Activated CD8-positive, alpha-beta T cell treated with anti-CD3 and anti-CD28 coated beads for 36 hours (primary cell): ENCODE measurements at regions of chr1 and their contacts with region 1.

Region 1: DNA sequence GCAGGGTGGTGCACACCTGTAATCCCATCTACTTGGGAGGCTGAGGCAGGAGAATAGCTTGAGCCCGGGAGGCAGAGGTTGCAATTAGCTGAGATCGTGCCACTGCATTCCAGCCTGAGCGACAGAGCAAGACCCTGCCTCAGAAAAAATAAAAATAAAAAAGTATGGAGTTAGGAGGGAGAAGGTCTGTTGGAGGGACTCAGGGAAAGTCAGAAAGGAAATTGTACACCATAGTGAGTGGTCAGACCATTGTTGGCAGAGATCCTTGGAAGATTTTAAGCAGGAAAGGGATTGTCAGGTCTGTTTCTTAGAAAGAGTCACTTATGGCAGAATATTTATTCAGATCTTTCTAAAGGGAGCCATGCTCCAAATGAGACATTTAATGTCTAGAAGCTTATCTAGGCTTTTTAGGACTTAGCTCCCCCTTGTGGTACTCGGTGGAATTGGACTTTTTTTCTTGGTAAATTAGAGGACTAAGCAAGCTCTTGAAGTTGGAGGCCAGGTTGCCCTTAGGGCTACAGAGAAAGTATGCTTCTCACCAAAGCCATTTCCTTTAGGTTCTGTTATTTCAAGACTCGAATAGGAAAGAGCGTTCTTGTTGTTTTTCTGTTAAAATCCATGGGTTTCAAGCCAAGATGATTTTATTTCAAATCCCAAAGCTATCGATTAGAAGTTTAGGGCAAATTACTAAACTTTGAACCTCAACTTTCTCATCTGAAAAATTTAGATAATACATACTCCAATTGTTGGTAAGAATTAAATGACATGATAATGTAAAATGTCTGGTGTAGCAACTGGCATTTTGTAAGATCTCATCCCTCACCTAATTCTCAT is 16.5 kb downstream of the MIA3 start:
- DNase-seq: peak; percentile 84
- ATAC-seq: peak; percentile 94
- H3K4me3 Mint-ChIP-seq: no peak overlapping the region
- H3K27ac Mint-ChIP-seq: peak overlapping the region; percentile 60
- H3K4me1 Mint-ChIP-seq: peaks cover 9% of the 10 kb centered on the region
- H3K27me3 Mint-ChIP-seq: no peaks in the 10 kb centered on the region
- CTCF ChIP-seq: peak; percentile 84

Region 2: GRCh38 chr1:222465211-222466041 is 169.0 kb before region 1 on chr1:
- CTCF ChIA-PET with region 1: interaction called, 56 read pairs
- POLR2A ChIA-PET with region 1: no interaction called
- intact Hi-C with region 1: loop called (anchors 1 kb)
- DNase-seq: peak; percentile 81
- ATAC-seq: peak; percentile 98
- H3K4me3 Mint-ChIP-seq: peak overlapping the region; percentile 67
- H3K27ac Mint-ChIP-seq: peak overlapping the region; percentile 88
- H3K4me1 Mint-ChIP-seq: peaks cover 8% of the 10 kb centered on the region
- H3K27me3 Mint-ChIP-seq: no peaks in the 10 kb centered on the region
- CTCF ChIP-seq: peak; percentile 99

Region 3: GRCh38 chr1:222589462-222590302 is 44.7 kb before region 1 on chr1 and contains the start of gene TAF1A:
- CTCF ChIA-PET with region 1: interaction called, 10 read pairs
- POLR2A ChIA-PET with region 1: no interaction called
- intact Hi-C with region 1: no loop called
- DNase-seq: peak; percentile 92
- ATAC-seq: peak; percentile 99
- H3K4me3 Mint-ChIP-seq: peak within 1 kb of the TSS; percentile 98
- H3K27ac Mint-ChIP-seq: peak within 1 kb of the TSS; percentile 96
- H3K4me1 Mint-ChIP-seq: peaks cover 44% of the 10 kb centered on the region
- H3K27me3 Mint-ChIP-seq: no peaks in the 10 kb centered on the region
- CTCF ChIP-seq: no peak
- total RNA-seq, gene TAF1A: 18.4 to 19.0 TPM

Region 4: DNA sequence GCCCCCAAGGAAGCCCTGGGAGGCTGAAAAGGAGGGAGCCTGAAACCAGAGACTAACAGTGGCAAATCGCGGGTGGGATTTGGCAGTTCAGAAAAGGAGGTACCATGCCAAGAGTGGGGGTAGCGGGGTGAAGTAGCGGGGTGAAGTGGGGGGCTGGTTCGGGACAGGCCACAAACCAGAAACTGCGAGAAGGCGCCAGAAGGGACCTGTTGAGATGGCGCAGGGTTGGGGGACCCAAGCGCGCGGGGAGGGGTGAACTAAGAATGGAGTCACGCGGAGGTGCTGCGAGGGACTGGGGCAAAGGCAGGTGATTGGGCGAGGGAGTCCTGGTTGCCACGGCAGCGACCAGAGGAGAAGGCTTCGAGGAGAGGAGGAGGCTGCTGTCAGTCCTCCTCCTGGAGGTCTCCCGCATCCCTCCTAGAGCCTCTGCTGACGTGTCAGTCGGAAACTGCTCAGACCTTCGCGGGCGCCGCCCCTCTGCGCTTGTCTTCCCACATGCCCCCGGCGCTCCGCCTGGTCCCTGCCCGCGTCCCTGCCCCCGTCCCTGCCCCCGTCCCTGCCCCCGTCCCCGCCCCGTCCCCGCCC is 16.9 kb before region 1 on chr1:
- CTCF ChIA-PET with region 1: interaction called, 35 read pairs
- POLR2A ChIA-PET with region 1: interaction called, 3 read pairs
- intact Hi-C with region 1: no loop called
- DNase-seq: peak; percentile 95
- ATAC-seq: peak; percentile 95
- H3K4me3 Mint-ChIP-seq: peak overlapping the region; percentile 83
- H3K27ac Mint-ChIP-seq: peak overlapping the region; percentile 90
- H3K4me1 Mint-ChIP-seq: peaks cover 25% of the 10 kb centered on the region
- H3K27me3 Mint-ChIP-seq: peaks cover 13% of the 10 kb centered on the region
- CTCF ChIP-seq: no peak

Region 5: DNA sequence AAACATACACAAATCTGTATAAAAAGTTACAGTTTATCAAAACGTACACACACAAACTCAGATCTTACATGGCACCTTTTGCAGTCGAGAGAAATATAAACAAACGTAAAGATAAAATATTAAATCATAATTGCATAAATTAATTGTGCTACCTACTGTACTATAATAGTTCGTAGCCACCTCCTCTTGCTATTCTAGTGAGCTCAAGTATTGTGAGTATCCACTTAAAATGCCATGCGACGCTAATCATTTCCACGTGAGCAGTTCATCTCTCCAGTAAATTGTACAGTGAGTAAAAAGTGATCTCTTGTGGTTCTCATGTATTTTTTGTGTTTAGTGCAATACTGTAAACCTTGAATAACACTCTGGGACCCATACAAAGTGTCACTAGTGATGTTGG is 10.2 kb before region 1 on chr1:
- CTCF ChIA-PET with region 1: interaction called, 35 read pairs
- POLR2A ChIA-PET with region 1: no interaction called
- intact Hi-C with region 1: no loop called
- DNase-seq: no peak
- ATAC-seq: no peak
- H3K4me3 Mint-ChIP-seq: no peak overlapping the region
- H3K27ac Mint-ChIP-seq: no peak overlapping the region
- H3K4me1 Mint-ChIP-seq: peaks cover 20% of the 10 kb centered on the region
- H3K27me3 Mint-ChIP-seq: no peaks in the 10 kb centered on the region
- CTCF ChIP-seq: no peak

Region 6: DNA sequence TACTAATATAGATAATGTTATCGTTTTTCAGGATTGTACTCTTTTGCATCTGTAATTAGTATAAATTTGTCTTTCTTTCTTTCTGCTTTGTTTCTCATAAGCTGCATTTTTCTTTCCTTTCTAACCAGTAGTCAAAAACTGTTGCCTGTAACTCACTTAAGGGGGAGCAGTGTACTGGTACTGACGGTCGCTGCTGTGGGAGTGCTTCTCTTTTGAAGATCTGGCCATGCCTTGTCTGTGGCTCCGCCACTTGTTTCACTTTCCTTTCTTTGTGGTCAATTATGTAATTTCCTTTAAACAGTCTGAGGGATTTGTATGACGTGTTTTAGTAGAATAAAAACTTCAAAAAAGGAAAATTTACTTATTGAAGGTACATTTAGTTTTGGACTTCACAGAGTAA is 20.5 kb after region 1 on chr1:
- CTCF ChIA-PET with region 1: interaction called, 13 read pairs
- POLR2A ChIA-PET with region 1: no interaction called
- intact Hi-C with region 1: no loop called
- DNase-seq: peak; percentile 86
- ATAC-seq: peak; percentile 85
- H3K4me3 Mint-ChIP-seq: peak overlapping the region; percentile 38
- H3K27ac Mint-ChIP-seq: peak overlapping the region; percentile 88
- H3K4me1 Mint-ChIP-seq: peaks cover 56% of the 10 kb centered on the region
- H3K27me3 Mint-ChIP-seq: no peaks in the 10 kb centered on the region
- CTCF ChIP-seq: peak; percentile 16

Region 7: DNA sequence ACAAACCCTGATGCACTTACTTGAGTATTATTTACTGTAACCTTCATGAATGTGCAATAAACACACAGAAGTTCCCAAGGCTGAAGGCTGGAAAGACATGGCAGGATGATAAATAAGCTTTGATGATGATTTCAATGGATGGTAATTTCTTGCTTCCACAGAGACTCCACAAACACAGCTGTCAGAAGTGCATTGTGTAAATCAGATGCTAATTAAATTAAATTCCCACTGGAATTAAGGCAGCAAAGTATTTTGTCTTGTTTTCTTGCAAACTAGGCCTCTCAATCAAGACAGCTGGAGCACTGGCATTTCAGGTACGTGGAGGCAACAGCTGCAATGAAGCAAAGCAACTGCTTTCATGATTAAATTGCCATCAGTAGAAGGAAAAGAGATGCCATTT is 126.7 kb after region 1 on chr1:
- CTCF ChIA-PET with region 1: no interaction called
- POLR2A ChIA-PET with region 1: no interaction called
- intact Hi-C with region 1: no loop called
- DNase-seq: no peak
- ATAC-seq: no peak
- H3K4me3 Mint-ChIP-seq: no peak overlapping the region
- H3K27ac Mint-ChIP-seq: no peak overlapping the region
- H3K4me1 Mint-ChIP-seq: no peaks in the 10 kb centered on the region
- H3K27me3 Mint-ChIP-seq: peaks cover 2% of the 10 kb centered on the region
- CTCF ChIP-seq: no peak